ENCODE measurements at regions of chr3 and their contacts with region 1.

Region 1: GRCh38 chr3:196274585-196274984 is 12.9 kb downstream of the PCYT1A start:
- DNase-seq: peak; percentile 85
- H3K4me3 Mint-ChIP-seq: peak overlapping the region; percentile 69
- H3K27ac Mint-ChIP-seq: peak overlapping the region; percentile 92
- H3K4me1 Mint-ChIP-seq: peaks cover 61% of the 10 kb centered on the region
- H3K27me3 Mint-ChIP-seq: no peaks in the 10 kb centered on the region

Region 2: GRCh38 chr3:196227629-196228493 is 46.7 kb before region 1 on chr3:
- CTCF ChIA-PET with region 1: no interaction called
- POLR2A ChIA-PET with region 1: no interaction called
- DNase-seq: no peak
- H3K4me3 Mint-ChIP-seq: no peak overlapping the region
- H3K27ac Mint-ChIP-seq: no peak overlapping the region
- H3K4me1 Mint-ChIP-seq: no peaks in the 10 kb centered on the region
- H3K27me3 Mint-ChIP-seq: peaks cover 4% of the 10 kb centered on the region

Region 3: DNA sequence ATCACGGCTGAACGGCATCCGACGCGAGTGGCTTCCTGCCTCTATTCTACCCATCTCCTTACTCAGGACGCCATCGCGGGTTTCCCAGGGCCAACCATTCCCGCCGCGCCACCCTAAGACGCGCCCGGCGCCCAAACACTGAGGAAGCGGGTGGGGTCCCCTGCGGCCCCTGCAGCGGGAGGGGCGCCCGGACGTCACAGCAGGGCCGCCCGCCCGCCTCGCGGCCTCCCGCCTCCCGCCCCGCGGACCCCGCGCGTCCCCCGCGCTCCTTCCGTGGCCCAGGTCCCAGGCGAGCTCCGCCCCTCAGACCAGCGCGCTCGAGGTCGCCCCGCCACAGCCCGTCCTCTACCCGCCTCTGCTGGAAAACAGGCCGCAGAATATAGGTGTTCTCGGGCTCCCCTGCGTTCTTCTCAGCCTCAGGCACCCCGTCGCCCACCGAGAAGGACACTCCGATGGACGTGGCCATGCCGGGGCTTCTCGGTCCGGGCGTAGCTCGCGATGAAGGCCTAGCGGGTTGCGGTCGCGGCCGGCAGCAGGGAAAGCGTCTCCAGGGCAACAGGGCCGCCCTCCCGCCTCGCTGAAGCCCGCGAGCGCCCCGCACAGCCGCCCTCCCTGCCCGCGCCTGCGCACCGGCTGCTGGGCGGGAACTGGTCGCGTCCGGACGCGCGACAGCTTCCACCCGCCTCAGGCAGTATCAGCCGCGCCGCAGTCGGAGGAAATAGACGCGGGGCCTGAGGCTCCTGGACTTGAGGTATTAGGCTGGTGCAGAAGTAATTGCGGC is 43.3 kb after region 1 on chr3 and contains the start of gene DYNLT2B:
- CTCF ChIA-PET with region 1: interaction called, 13 read pairs
- POLR2A ChIA-PET with region 1: no interaction called
- DNase-seq: peak; percentile 88
- H3K4me3 Mint-ChIP-seq: peak within 1 kb of the TSS; percentile 93
- H3K27ac Mint-ChIP-seq: peak within 1 kb of the TSS; percentile 99
- H3K4me1 Mint-ChIP-seq: peaks cover 24% of the 10 kb centered on the region
- H3K27me3 Mint-ChIP-seq: no peaks in the 10 kb centered on the region
- total RNA-seq, gene DYNLT2B: 20.3 to 23.0 TPM